Activated CD8-positive, alpha-beta T cell treated with anti-CD3 and anti-CD28 coated beads for 36 hours (primary cell): ENCODE measurements at regions of chr17 and their contacts with region 1.

Region 1: DNA sequence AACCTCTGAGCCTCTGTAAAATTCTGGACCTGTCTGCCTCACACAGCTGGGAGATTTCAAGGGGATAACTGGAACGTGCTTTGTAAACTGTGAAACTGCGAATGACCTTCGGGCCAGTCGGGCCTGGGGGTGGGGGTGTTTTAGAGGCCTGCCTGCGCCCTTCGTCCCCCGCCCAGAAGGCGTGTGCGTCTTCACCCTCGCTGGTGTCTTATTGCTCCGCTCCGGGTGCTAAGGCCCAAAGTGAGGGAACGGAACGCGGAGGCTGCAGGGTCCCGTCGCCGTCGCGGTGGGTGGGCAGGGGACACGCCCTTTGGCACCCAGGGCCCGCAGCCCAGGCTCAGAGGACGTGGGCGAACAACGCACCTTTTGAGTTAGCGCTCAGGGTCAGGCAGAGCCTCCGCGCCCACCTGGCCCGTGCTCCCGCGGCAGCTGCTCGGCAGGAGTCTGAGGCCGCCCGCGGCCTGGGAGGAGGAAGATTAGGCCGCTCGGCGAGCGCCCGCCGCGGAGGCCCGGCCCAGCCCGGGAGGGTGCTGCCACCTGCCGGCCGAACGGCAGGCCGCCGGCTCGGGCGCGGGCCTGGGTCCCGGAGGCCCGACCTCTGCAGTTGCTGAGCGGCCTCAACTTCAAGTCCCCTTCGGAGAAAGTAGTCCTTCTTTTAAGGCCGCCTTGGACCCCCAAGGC is 29.7 kb downstream of the DCAKD start:
- DNase-seq: peak; percentile 65
- ATAC-seq: peak; percentile 68
- H3K4me3 Mint-ChIP-seq: peak overlapping the region; percentile 33
- H3K27ac Mint-ChIP-seq: no peak overlapping the region
- H3K4me1 Mint-ChIP-seq: peaks cover 21% of the 10 kb centered on the region
- H3K27me3 Mint-ChIP-seq: peaks cover 33% of the 10 kb centered on the region
- CTCF ChIP-seq: peak; percentile 96

Region 2: GRCh38 chr17:44911133-44912001 is 110.4 kb before region 1 on chr17:
- CTCF ChIA-PET with region 1: interaction called, 37 read pairs
- POLR2A ChIA-PET with region 1: no interaction called
- intact Hi-C with region 1: no loop called
- DNase-seq: peak; percentile 70
- ATAC-seq: peak; percentile 87
- H3K4me3 Mint-ChIP-seq: no peak overlapping the region
- H3K27ac Mint-ChIP-seq: no peak overlapping the region
- H3K4me1 Mint-ChIP-seq: peaks cover 2% of the 10 kb centered on the region
- H3K27me3 Mint-ChIP-seq: peaks cover 24% of the 10 kb centered on the region
- CTCF ChIP-seq: no peak

Region 3: DNA sequence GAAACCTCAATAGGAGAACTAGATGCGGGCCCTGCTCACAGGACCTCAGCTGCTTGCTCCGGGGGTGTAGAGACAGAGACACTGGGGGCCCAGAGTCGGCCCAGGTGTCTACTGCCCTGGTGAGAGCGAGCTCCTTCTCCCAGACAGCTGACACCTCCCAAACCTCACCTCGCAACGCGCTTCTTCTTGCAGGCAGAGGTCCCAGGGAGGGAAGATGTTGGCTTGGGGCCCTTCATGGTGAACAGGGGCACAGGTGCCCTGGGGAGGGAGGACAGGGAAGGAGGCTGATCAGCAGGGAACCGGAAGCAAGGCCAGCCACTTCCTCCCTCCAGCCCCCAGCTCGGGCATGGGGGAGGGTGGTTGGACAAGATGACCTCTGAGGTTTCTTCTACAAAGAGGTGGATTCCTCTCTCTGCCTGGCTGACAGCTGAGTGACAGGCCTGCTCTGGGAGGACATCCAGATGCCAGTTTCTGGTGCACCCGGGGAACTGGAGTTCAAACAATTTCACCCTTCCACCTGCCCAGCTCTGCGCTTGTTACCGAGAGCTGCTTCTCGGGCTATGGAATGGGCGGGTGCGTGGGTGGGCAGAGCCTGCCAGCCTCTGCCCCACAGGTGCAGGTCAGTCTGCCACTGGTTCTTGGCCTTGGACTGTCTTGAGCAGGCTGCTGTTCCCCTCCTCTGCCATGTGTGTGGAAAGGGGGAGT is 94.8 kb before region 1 on chr17:
- CTCF ChIA-PET with region 1: interaction called, 119 read pairs
- POLR2A ChIA-PET with region 1: interaction called, 21 read pairs
- intact Hi-C with region 1: loop called (anchors 5 kb)
- DNase-seq: no peak
- ATAC-seq: no peak
- H3K4me3 Mint-ChIP-seq: no peak overlapping the region
- H3K27ac Mint-ChIP-seq: no peak overlapping the region
- H3K4me1 Mint-ChIP-seq: no peaks in the 10 kb centered on the region
- H3K27me3 Mint-ChIP-seq: peaks cover 3% of the 10 kb centered on the region
- CTCF ChIP-seq: no peak

Region 4: DNA sequence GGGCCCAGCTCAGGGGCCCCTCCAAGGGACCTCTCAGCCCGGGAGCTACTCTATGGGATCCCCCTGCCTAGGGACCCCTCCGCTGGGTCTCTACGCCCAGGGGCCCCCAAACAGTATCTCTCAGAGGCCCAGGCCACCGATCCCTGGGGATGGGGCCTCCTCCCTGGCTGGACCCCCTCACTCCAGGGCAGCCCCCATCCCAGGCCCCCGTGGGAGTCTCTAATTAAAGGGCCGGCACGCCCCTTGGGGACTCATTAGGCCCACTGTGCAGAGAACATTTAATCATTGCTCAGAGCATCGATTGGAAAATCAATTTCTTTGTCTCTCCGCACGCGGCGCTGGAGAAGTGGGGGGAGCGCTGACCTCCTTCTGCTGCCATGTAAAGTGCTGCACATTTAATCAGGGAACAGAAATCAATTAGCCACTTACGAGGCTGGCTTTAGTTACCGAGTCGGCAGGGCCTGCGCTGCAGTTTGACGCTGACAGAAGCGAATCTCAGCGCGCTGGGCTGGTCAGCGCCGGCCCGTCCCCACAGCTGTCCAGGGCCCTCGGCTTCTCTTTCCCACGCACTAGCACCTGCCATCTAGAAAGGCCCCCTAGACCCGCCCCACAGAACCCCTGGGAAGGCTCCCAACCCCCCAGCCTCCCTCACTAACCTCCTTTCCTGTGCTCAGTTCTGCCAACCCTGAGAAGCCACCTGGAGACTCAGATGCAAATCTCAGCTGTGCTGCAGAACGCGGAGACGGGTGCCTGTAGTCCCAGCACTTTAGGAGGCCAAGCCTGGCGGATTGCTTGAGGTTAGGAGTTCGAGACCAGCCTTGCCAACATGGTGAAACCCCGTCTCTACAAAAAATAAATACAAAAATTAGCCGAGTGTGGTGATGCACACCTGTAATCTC is 33.5 kb before region 1 on chr17:
- CTCF ChIA-PET with region 1: interaction called, 21 read pairs
- POLR2A ChIA-PET with region 1: no interaction called
- intact Hi-C with region 1: no loop called
- DNase-seq: no peak
- ATAC-seq: no peak
- H3K4me3 Mint-ChIP-seq: no peak overlapping the region
- H3K27ac Mint-ChIP-seq: no peak overlapping the region
- H3K4me1 Mint-ChIP-seq: peaks cover 10% of the 10 kb centered on the region
- H3K27me3 Mint-ChIP-seq: peaks cover 35% of the 10 kb centered on the region
- CTCF ChIP-seq: no peak

Region 5: GRCh38 chr17:45051060-45051719 is 29.4 kb after region 1 on chr17 and contains the start of gene DCAKD:
- CTCF ChIA-PET with region 1: interaction called, 15 read pairs
- POLR2A ChIA-PET with region 1: interaction called, 3 read pairs
- intact Hi-C with region 1: no loop called
- DNase-seq: peak; percentile 94
- ATAC-seq: peak; percentile 97
- H3K4me3 Mint-ChIP-seq: peak within 1 kb of the TSS; percentile 84
- H3K27ac Mint-ChIP-seq: peak within 1 kb of the TSS; percentile 96
- H3K4me1 Mint-ChIP-seq: peaks cover 44% of the 10 kb centered on the region
- H3K27me3 Mint-ChIP-seq: no peaks in the 10 kb centered on the region
- CTCF ChIP-seq: no peak
- total RNA-seq, gene DCAKD: 34.3 to 35.8 TPM